ENCODE measurements at regions of chr4 and their contacts with region 1.

Region 1: DNA sequence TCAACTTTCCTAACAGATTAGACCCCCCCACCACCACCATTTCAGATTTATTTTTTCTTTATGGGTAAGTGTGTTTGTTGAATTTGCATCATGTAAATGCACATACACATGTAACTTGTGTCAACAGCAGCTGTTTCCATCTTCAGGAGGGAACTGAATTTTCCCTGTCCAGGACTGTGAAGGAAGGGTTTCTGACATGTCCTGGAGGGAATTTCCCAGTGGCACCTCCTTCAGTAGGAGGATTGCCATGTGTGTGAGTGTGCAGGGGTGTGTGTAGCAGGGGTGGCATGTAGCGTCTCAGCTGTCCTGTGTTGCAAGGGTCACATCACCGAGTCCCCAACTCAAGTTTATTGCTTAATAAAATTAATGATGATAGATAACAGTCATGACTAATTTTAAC is 19.7 kb downstream of the HERC6 start:
- DNase-seq: no peak
- H3K4me3 ChIP-seq: no peak overlapping the region
- H3K4me3 Mint-ChIP-seq: no peak overlapping the region
- H3K27ac ChIP-seq: no peak overlapping the region
- H3K27ac Mint-ChIP-seq: no peak overlapping the region
- H3K4me1 ChIP-seq: no peaks in the 10 kb centered on the region
- H3K4me1 Mint-ChIP-seq: no peaks in the 10 kb centered on the region
- H3K27me3 ChIP-seq: no peaks in the 10 kb centered on the region
- H3K27me3 Mint-ChIP-seq: no peaks in the 10 kb centered on the region

Region 2: DNA sequence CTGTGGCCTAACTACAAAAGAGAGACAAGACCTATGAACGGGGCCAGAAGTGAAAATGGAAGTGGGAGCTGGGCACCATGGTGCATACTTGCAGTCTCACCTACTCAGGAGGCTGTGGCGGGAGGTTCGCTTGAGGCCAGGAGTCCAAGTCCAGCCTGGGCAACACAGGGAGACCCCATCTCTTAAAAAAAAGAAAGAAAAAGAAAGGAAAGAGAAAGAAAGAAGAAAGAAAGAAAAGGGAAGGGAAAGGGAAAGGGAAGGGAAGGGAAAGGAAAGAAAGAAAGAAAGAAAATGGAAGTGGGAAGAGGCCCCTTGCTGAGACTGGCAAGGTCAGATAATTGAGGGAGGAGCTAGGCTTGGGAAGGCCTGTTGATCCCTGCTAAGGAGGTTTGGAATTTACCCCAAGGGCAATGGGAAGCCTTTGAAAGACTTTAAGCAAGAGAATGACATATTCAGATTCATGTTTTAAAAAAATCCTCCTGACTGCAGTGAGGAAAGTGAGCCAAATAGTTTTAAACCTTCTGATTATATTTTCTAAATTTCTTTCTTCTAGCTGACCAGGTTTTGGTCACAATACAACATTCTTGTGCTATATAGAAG is 40.9 kb after region 1 on chr4:
- CTCF ChIA-PET with region 1: no interaction called
- POLR2A ChIA-PET with region 1: no interaction called
- intact Hi-C with region 1: loop called (anchors 5 kb)
- DNase-seq: no peak
- H3K4me3 ChIP-seq: no peak overlapping the region
- H3K4me3 Mint-ChIP-seq: no peak overlapping the region
- H3K27ac ChIP-seq: no peak overlapping the region
- H3K27ac Mint-ChIP-seq: peak overlapping the region; percentile 12 to 90 (median 79)
- H3K4me1 ChIP-seq: no peaks in the 10 kb centered on the region
- H3K4me1 Mint-ChIP-seq: peaks cover 0 to 5% (median 2%) of the 10 kb centered on the region in 4 donors
- H3K27me3 ChIP-seq: no peaks in the 10 kb centered on the region
- H3K27me3 Mint-ChIP-seq: no peaks in the 10 kb centered on the region

Region 3: DNA sequence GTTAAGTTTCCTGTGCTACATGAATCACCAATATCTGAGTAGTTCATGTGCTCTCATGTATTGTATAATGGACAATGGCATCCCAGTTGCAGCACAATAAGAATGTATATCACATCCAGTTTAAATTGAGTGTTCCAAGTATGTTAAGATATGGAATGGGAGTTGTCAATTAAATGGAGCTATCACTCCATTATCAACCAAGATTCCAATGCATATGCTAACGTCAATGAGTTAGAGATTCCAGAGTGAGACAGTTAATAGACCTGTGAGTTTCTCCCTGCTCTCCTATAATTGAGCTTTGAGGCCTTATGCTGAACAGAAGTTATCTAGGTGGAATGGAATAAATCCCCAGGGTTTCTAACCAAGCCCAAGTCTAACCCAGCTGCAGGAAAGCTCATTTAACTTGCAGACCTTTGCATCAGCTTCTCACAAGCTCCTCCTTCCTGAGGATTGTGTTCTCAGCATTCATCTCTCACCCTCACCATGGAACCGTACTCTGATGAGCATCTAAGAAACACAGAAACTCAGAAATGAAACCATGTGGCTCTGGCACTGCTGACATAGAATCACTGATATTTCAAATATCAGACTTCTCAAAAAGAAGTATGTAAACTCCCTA is 797.8 kb after region 1 on chr4:
- CTCF ChIA-PET with region 1: no interaction called
- POLR2A ChIA-PET with region 1: no interaction called
- intact Hi-C with region 1: no loop called
- DNase-seq: no peak
- H3K4me3 ChIP-seq: no peak overlapping the region
- H3K4me3 Mint-ChIP-seq: no peak overlapping the region
- H3K27ac ChIP-seq: no peak overlapping the region
- H3K27ac Mint-ChIP-seq: no peak overlapping the region
- H3K4me1 ChIP-seq: no peaks in the 10 kb centered on the region
- H3K4me1 Mint-ChIP-seq: no peaks in the 10 kb centered on the region
- H3K27me3 ChIP-seq: no peaks in the 10 kb centered on the region
- H3K27me3 Mint-ChIP-seq: peaks cover 1 to 2% of the 10 kb centered on the region in 2 donors